ENCODE measurements at regions of chr19 and their contacts with region 1.

Region 1: GRCh38 chr19:4723367-4724187 is at the start of gene DPP9:
- DNase-seq: peak; percentile 93 to 99 (median 96)
- ATAC-seq: peak; percentile 94
- H3K4me3 ChIP-seq: peak within 1 kb of the TSS; percentile 76 to 78
- H3K4me3 Mint-ChIP-seq: peak within 1 kb of the TSS; percentile 93
- H3K27ac ChIP-seq: peak within 1 kb of the TSS; percentile 78 to 79
- H3K27ac Mint-ChIP-seq: peak within 1 kb of the TSS; percentile 97
- H3K4me1 ChIP-seq: peaks cover 31% of the 10 kb centered on the region
- H3K4me1 Mint-ChIP-seq: peaks cover 32% of the 10 kb centered on the region
- H3K27me3 ChIP-seq: no peaks in the 10 kb centered on the region
- H3K27me3 Mint-ChIP-seq: no peaks in the 10 kb centered on the region
- CTCF ChIP-seq: no peak
- total RNA-seq, gene DPP9: 85.5 to 86.6 TPM

Region 2: DNA sequence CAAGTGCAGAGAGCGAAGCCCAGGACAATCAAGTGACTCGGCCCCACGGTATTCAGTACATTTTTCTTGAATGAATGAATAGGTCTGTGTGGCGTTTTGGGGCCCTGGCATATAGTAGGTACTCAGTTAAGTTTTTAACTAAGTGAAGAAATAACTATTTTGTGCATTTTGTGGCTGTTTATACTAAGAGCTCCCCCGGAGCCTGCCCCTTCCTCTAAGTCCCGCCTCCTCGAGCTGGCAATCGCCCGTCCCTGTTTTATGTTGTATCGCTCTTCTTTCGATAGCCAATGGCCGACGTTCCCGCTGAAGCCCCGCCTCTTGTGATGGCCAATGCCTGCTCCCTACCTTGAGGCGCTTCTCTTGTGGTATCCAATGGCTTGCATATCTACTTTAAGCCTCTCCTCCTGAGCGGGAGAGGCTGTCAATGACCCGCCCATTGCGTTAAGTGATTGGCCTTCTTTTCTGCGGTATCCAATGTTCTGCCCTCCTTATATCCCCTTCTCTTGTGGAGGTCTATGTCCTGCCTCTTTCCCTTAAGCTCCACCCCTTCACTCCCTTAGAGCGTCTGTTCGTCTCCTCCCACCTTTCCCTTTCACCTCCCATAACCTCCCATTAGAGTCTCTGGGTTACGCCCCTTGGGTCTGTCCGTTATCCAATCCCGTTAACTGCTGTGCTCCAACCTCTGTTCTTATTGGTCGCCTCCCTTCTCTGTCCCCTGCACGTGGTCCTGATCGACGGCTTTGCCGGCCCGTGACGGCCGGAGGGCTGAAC is 252.0 kb before region 1 on chr19:
- CTCF ChIA-PET with region 1: no interaction called
- POLR2A ChIA-PET with region 1: no interaction called
- intact Hi-C with region 1: loop called in 1 of 2 experiments (anchors 5 kb)
- DNase-seq: peak; percentile 94 to 100 (median 97)
- ATAC-seq: peak; percentile 85
- H3K4me3 ChIP-seq: peak overlapping the region; percentile 55 to 63
- H3K4me3 Mint-ChIP-seq: no peak overlapping the region
- H3K27ac ChIP-seq: peak overlapping the region; percentile 70 to 72
- H3K27ac Mint-ChIP-seq: no peak overlapping the region
- H3K4me1 ChIP-seq: peaks cover 20% of the 10 kb centered on the region
- H3K4me1 Mint-ChIP-seq: peaks cover 22% of the 10 kb centered on the region
- H3K27me3 ChIP-seq: no peaks in the 10 kb centered on the region
- H3K27me3 Mint-ChIP-seq: no peaks in the 10 kb centered on the region
- CTCF ChIP-seq: no peak

Region 3: GRCh38 chr19:4669723-4670480 is 53.7 kb before region 1 on chr19 and contains the start of gene MYDGF:
- CTCF ChIA-PET with region 1: no interaction called
- POLR2A ChIA-PET with region 1: interaction called, 3 read pairs
- intact Hi-C with region 1: loop called in 1 of 2 experiments (anchors 1 kb)
- DNase-seq: peak; percentile 87 to 96 (median 92)
- ATAC-seq: peak; percentile 98
- H3K4me3 ChIP-seq: peak within 1 kb of the TSS; percentile 75 to 84
- H3K4me3 Mint-ChIP-seq: peak within 1 kb of the TSS; percentile 88
- H3K27ac ChIP-seq: peak within 1 kb of the TSS; percentile 58 to 71
- H3K27ac Mint-ChIP-seq: peak within 1 kb of the TSS; percentile 90
- H3K4me1 ChIP-seq: peaks cover 12% of the 10 kb centered on the region
- H3K4me1 Mint-ChIP-seq: peaks cover 18% of the 10 kb centered on the region
- H3K27me3 ChIP-seq: no peaks in the 10 kb centered on the region
- H3K27me3 Mint-ChIP-seq: no peaks in the 10 kb centered on the region
- CTCF ChIP-seq: no peak
- total RNA-seq, gene MYDGF: 30.1 to 30.3 TPM

Region 4: GRCh38 chr19:4909897-4910593 is 186.5 kb after region 1 on chr19:
- CTCF ChIA-PET with region 1: no interaction called
- POLR2A ChIA-PET with region 1: no interaction called
- intact Hi-C with region 1: loop called in 1 of 2 experiments (anchors 2 kb)
- DNase-seq: peak; percentile 85 to 96 (median 93)
- ATAC-seq: peak; percentile 82
- H3K4me3 ChIP-seq: peak overlapping the region; percentile 44 to 62
- H3K4me3 Mint-ChIP-seq: peak overlapping the region; percentile 99
- H3K27ac ChIP-seq: no peak overlapping the region
- H3K27ac Mint-ChIP-seq: no peak overlapping the region
- H3K4me1 ChIP-seq: peaks cover 57% of the 10 kb centered on the region
- H3K4me1 Mint-ChIP-seq: peaks cover 66% of the 10 kb centered on the region
- H3K27me3 ChIP-seq: no peaks in the 10 kb centered on the region
- H3K27me3 Mint-ChIP-seq: no peaks in the 10 kb centered on the region
- CTCF ChIP-seq: no peak

Region 5: DNA sequence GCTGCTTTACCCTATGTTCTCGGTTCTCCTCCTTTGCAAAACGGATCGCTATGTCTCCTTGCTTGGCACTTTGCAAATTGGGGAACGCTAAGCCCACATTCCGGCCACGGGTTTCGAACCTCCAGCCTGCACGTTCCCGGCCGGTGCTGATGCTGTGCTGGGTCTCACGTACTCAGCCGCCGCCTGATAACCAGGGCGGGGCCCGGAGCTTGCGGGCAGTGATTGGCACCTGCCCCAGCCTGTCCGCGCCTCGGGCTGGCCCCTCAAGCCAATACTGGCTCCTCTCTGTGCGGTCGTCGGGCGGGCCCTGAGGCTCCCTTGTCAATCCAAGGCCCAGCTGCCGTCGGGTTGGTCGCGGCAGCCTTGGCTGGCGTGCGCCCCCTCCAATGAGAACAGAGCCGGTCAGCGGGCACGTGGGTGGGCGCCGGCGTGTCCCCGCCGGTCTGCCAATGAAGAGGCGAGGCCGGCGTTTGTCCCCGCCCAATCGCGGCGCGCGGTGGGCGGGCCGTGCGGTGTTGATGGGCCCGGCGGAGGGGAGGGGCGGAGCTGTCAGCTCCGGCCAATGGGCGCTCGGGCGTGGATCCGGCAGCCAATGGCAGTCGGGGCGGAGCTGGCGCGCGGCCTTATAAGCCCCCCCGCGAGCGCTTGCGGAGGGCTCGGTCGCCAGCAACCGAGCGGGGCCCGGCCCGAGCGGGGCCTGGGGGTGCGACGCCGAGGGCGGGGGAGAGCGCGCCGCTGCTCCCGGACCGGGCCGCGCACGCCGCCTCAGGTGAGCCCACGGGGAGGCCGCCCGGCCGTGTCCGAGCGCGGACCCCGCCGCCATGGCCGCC is 245.1 kb after region 1 on chr19 and contains the start of gene KDM4B:
- CTCF ChIA-PET with region 1: no interaction called
- POLR2A ChIA-PET with region 1: no interaction called
- intact Hi-C with region 1: loop called (anchors 2 to 10 kb)
- DNase-seq: peak; percentile 96 to 100 (median 99)
- ATAC-seq: peak; percentile 87
- H3K4me3 ChIP-seq: peak within 1 kb of the TSS; percentile 54 to 57
- H3K4me3 Mint-ChIP-seq: peak within 1 kb of the TSS; percentile 87
- H3K27ac ChIP-seq: peak within 1 kb of the TSS; percentile 33 to 60
- H3K27ac Mint-ChIP-seq: peak within 1 kb of the TSS; percentile 81
- H3K4me1 ChIP-seq: peaks cover 30% of the 10 kb centered on the region
- H3K4me1 Mint-ChIP-seq: peaks cover 30% of the 10 kb centered on the region
- H3K27me3 ChIP-seq: no peaks in the 10 kb centered on the region
- H3K27me3 Mint-ChIP-seq: no peaks in the 10 kb centered on the region
- CTCF ChIP-seq: no peak
- total RNA-seq, gene KDM4B: 111 to 121 TPM

Region 6: DNA sequence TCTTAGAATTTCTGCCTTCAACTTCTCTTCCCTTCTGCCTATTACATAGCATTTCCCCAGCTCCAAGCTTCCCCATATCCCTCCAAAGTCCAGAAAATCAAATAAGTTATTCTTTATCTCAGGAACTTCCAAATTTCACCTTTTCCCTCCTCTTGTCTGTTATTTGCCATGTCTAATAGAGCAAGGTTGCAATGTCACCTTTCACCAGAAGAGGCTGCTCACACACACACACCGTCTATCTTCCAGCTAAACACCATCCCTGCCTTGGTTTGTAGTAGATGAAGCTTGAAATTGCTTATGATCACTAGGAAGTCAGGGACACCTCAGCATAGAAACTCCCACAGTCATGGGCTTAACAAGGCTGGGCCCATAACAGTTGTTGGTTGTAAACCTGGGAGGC is 780.0 kb after region 1 on chr19:
- CTCF ChIA-PET with region 1: no interaction called
- POLR2A ChIA-PET with region 1: no interaction called
- intact Hi-C with region 1: no loop called
- DNase-seq: no peak
- ATAC-seq: no peak
- H3K4me3 ChIP-seq: no peak overlapping the region
- H3K4me3 Mint-ChIP-seq: no peak overlapping the region
- H3K27ac ChIP-seq: no peak overlapping the region
- H3K27ac Mint-ChIP-seq: no peak overlapping the region
- H3K4me1 ChIP-seq: no peaks in the 10 kb centered on the region
- H3K4me1 Mint-ChIP-seq: no peaks in the 10 kb centered on the region
- H3K27me3 ChIP-seq: no peaks in the 10 kb centered on the region
- H3K27me3 Mint-ChIP-seq: peaks cover 11% of the 10 kb centered on the region
- CTCF ChIP-seq: no peak

Region 7: DNA sequence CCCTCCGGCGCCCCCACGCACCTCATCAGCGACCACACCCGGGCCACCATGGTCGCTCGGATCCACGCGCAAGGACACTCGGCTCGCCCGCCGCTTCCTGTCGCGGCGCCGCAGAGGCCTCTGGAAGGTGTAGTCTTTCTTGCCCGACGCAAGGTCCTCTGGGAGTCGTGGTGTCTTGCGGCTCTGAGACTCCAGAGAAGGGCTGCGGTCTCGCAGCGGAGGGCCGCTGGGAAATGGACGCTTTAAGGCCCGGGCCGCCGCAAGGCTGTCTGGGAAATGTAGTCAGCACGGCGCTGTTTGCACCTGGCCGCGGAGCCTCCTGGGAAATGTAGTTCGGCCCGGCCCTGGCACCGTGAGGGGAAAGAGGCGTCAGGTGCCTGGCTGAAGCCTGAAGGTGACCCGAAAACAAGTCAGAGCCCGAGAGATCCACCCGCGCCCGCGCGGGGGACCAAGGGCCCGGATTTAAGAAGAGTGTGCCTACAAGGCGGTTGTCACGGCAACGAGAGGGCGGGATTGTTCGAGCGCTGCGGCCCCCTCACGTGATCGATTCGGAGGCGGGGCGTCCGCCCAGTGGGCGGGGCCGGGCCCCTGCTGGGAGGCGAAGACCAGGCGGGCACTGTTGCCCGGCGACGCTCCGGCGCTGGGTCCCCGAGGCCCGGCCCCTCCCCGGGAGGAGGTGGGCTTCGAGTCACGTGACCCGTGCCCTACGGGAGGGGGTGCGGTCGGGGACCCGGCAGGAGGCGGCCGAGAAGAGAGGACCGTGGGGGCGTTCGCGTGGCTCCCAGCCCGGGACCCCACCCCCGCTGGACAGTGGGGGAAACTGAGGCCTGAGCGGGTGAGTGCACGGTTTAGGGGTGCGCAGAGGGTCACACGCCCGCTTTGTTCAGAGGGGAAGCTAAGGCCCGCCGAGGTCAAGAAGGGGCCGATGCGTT is 957.1 kb after region 1 on chr19 and contains the starts of genes HSD11B1L and MICOS13:
- CTCF ChIA-PET with region 1: no interaction called
- POLR2A ChIA-PET with region 1: no interaction called
- intact Hi-C with region 1: loop called in 1 of 2 experiments (anchors 1 kb)
- DNase-seq: peak; percentile 95 to 100 (median 98)
- ATAC-seq: peak; percentile 94
- H3K4me3 ChIP-seq: peak within 1 kb of the TSS; percentile 94 to 96
- H3K4me3 Mint-ChIP-seq: peak within 1 kb of the TSS; percentile 90
- H3K27ac ChIP-seq: peak within 1 kb of the TSS; percentile 98 to 100
- H3K27ac Mint-ChIP-seq: peak within 1 kb of the TSS; percentile 96
- H3K4me1 ChIP-seq: peaks cover 15% of the 10 kb centered on the region
- H3K4me1 Mint-ChIP-seq: peaks cover 25% of the 10 kb centered on the region
- H3K27me3 ChIP-seq: no peaks in the 10 kb centered on the region
- H3K27me3 Mint-ChIP-seq: no peaks in the 10 kb centered on the region
- CTCF ChIP-seq: no peak
- total RNA-seq, gene HSD11B1L: 3.1 to 4.1 TPM
- total RNA-seq, gene MICOS13: 19.6 to 24.8 TPM

Measured in CD8-positive, alpha-beta T cell (primary cell).